ENCODE measurements at regions of chr19 and their contacts with region 1.

Region 1: DNA sequence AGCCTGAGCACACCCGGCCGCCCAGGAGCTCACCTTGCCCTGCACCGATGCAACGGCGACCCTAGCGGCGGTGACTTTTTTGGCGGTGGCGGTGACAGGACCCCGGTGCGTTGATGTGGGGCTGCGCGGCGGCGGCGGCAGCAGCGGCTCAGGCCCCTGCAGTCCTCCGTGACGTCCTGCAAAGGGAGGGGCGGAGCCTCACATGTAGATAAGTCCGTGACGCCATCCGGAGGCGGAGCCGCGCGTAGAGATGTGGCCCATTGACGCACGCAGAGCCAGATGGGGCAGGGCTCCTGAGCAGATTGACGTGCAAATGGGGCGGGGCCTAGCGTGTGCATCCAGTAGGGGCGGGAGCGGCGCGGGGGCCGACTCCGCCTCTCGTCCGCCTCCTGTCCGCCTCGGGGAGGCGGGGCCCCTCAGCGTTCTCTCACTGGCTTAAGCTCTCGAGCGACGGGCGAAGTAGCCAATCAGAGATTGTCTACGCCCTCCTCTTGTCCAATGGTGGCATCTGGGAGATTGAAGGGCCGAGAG is at the start of gene RAB3A:
- DNase-seq: peak; percentile 100
- ATAC-seq: peak; percentile 83
- H3K4me3 ChIP-seq: peak within 1 kb of the TSS; percentile 74 to 94 (median 91)
- H3K4me3 Mint-ChIP-seq: peak within 1 kb of the TSS; percentile 95
- H3K27ac ChIP-seq: peak within 1 kb of the TSS; percentile 86 to 98
- H3K27ac Mint-ChIP-seq: peak within 1 kb of the TSS; percentile 96
- H3K4me1 ChIP-seq: peaks cover 15 to 29% of the 10 kb centered on the region in 2 donors
- H3K4me1 Mint-ChIP-seq: peaks cover 28% of the 10 kb centered on the region
- H3K27me3 ChIP-seq: peaks cover 0 to 5% (median 1%) of the 10 kb centered on the region in 4 experiments
- H3K27me3 Mint-ChIP-seq: peaks cover 6% of the 10 kb centered on the region
- CTCF ChIP-seq: no peak
- total RNA-seq, gene RAB3A: 9.6 and 10.4 TPM in 2 replicates

Region 2: DNA sequence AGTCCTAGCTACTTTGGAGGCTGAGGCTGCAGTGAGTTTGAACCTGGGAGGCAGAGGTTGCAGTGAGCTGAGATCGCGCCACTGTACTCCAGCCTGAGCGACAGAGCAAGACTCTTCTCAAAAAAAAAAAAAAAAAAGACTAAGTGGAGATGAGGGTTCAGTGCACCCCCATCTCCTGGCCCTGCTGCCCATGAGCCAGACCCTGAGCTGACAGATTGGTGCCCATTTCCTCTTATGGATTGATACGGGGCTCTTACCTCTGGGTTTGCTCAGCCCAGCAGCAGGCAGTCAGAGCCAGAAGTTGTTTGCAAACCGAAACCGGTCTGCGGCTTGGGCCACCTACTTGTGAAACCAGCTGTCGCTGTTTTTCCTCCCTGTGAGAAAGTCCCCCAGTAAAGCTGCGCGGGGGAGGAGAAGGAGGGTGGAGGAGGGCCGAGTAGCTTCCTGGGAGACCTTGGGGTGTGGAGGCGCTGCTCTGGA is 159.1 kb before region 1 on chr19:
- CTCF ChIA-PET with region 1: no interaction called
- POLR2A ChIA-PET with region 1: interaction called, 10 read pairs
- intact Hi-C with region 1: no loop called
- DNase-seq: peak; percentile 93
- ATAC-seq: peak; percentile 91
- H3K4me3 ChIP-seq: peak overlapping the region in 4 of 5 experiments; percentile 20 to 52 (median 36)
- H3K4me3 Mint-ChIP-seq: peak overlapping the region; percentile 85
- H3K27ac ChIP-seq: peak overlapping the region; percentile 80 to 91
- H3K27ac Mint-ChIP-seq: peak overlapping the region; percentile 97
- H3K4me1 ChIP-seq: peaks cover 38 to 55% of the 10 kb centered on the region in 2 donors
- H3K4me1 Mint-ChIP-seq: peaks cover 52% of the 10 kb centered on the region
- H3K27me3 ChIP-seq: no peaks in the 10 kb centered on the region
- H3K27me3 Mint-ChIP-seq: no peaks in the 10 kb centered on the region
- CTCF ChIP-seq: no peak

Region 3: DNA sequence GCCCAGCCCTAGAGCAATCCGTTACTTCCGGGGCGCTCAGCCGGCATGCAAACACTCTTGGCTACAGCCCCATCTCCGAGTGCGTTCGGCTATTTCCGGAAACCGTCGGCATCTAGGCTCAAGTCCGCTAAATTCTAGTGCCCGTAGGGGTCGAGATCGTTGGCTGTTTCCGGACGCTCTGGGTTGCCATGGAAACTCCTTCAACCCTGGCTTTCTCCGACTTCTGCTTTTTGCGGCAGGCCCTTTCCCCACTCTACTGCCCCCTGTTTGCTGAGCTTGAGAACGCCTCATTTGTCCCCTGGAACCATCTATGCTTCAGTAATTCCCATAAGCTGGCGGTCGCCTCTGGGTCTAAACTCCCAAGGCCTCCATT is 51.5 kb before region 1 on chr19:
- CTCF ChIA-PET with region 1: no interaction called
- POLR2A ChIA-PET with region 1: no interaction called
- intact Hi-C with region 1: loop called (anchors 1 kb)
- DNase-seq: peak; percentile 100
- ATAC-seq: peak; percentile 71
- H3K4me3 ChIP-seq: peak overlapping the region; percentile 63 to 88 (median 70)
- H3K4me3 Mint-ChIP-seq: peak overlapping the region; percentile 89
- H3K27ac ChIP-seq: peak overlapping the region; percentile 90 to 93
- H3K27ac Mint-ChIP-seq: peak overlapping the region; percentile 95
- H3K4me1 ChIP-seq: peaks cover 14 to 25% of the 10 kb centered on the region in 2 donors
- H3K4me1 Mint-ChIP-seq: peaks cover 23% of the 10 kb centered on the region
- H3K27me3 ChIP-seq: no peaks in the 10 kb centered on the region
- H3K27me3 Mint-ChIP-seq: no peaks in the 10 kb centered on the region
- CTCF ChIP-seq: peak; percentile 88

Region 4: GRCh38 chr19:18173572-18174288 is 30.2 kb before region 1 on chr19 and contains the start of gene IFI30:
- CTCF ChIA-PET with region 1: interaction called, 5 read pairs
- POLR2A ChIA-PET with region 1: interaction called, 7 read pairs
- intact Hi-C with region 1: loop called (anchors 1 kb)
- DNase-seq: peak; percentile 97
- ATAC-seq: peak; percentile 65
- H3K4me3 ChIP-seq: peak within 1 kb of the TSS; percentile 67 to 97 (median 83)
- H3K4me3 Mint-ChIP-seq: peak within 1 kb of the TSS; percentile 94
- H3K27ac ChIP-seq: peak within 1 kb of the TSS; percentile 97 to 99
- H3K27ac Mint-ChIP-seq: peak within 1 kb of the TSS; percentile 98
- H3K4me1 ChIP-seq: peaks cover 72 to 90% of the 10 kb centered on the region in 2 donors
- H3K4me1 Mint-ChIP-seq: peaks cover 84% of the 10 kb centered on the region
- H3K27me3 ChIP-seq: no peaks in the 10 kb centered on the region
- H3K27me3 Mint-ChIP-seq: no peaks in the 10 kb centered on the region
- CTCF ChIP-seq: no peak
- total RNA-seq, gene IFI30: 171 TPM in 2 replicates

Region 5: DNA sequence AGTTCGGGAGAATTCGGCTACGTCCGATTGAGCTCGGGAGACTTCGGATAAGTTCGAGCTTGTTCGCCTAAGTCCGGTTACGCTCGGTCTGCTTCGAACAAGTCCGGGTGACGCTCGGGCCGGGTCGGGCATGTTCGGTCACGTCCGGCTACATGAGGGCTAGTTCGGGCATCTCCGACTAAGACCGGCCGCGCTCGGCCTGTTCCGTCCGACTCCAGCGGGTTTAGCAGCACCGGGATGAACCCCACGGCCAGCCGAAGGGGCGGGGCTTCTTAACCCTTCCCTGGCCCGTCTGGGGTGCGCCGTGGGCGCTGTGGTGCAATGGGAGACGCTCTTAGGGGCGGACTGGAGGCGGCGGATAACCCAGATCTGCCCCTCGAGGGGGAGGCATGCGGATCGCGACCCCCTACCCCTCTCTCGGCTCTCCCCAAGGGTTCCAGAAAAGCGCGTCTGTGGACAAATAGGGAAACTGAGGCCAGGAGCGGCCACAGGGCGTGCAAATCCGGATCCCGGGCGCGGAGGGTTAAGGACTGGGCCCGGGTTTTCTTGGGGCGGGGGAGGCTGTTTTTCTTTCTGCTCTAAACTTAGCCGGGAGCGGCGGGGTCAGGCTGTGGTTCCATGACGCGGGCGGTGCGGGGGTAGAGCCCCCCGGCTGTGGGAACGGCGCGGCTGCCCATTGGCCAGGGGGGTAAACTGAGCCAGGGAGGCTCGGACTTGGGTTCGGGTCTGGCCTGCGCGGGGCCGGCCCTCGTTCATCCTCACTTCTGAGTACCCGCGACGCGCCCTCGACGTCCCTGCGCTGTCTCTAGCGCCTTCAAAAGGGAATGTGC is 20.8 kb after region 1 on chr19:
- CTCF ChIA-PET with region 1: interaction called, 6 read pairs
- POLR2A ChIA-PET with region 1: interaction called, 7 read pairs
- intact Hi-C with region 1: loop called (anchors 1 kb)
- DNase-seq: peak; percentile 93
- ATAC-seq: peak; percentile 99
- H3K4me3 ChIP-seq: peak overlapping the region; percentile 21 to 68 (median 46)
- H3K4me3 Mint-ChIP-seq: peak overlapping the region; percentile 91
- H3K27ac ChIP-seq: no peak overlapping the region
- H3K27ac Mint-ChIP-seq: peak overlapping the region; percentile 71
- H3K4me1 ChIP-seq: peaks cover 29 to 36% of the 10 kb centered on the region in 2 donors
- H3K4me1 Mint-ChIP-seq: peaks cover 36% of the 10 kb centered on the region
- H3K27me3 ChIP-seq: peaks cover 0 to 85% (median 41%) of the 10 kb centered on the region in 4 experiments
- H3K27me3 Mint-ChIP-seq: peaks cover 53% of the 10 kb centered on the region
- CTCF ChIP-seq: no peak

Region 6: DNA sequence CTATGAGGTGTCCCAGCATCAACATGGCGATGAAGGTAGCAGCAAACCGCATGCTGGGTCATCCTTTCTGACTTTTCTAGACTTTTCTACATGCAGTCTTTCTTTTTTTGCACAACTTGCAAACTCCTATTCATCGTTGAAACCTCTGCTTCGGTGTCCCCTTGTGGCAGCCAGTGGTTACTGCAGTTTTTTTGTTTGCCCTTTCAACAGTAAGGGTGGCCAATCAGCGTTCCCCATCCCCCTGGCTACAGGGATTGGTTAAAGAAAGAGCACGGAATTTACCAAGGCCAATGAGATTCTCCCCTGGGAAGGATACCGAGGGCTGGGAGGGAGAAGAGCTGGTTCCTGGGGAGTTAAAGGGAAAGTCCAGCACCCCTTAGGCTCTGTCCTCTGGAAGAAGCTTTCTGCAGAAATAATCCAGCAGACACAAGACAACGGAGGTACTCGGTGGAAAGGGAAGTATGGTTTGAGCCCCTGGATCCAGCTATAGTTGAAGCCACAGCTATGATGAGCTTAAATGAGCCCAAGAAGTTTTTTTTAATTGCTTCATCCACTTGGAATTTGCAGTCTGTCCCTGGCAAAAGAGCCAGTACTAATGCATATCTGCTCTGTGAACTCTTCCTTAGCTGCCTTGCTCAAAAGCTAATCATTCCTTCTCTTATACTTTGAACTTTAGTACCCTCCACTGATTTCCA is 124.6 kb after region 1 on chr19:
- CTCF ChIA-PET with region 1: interaction called, 30 read pairs
- POLR2A ChIA-PET with region 1: no interaction called
- intact Hi-C with region 1: loop called (anchors 1 kb)
- DNase-seq: peak; percentile 92
- ATAC-seq: peak; percentile 98
- H3K4me3 ChIP-seq: peak overlapping the region; percentile 16 to 62 (median 32)
- H3K4me3 Mint-ChIP-seq: peak overlapping the region; percentile 57
- H3K27ac ChIP-seq: no peak overlapping the region
- H3K27ac Mint-ChIP-seq: no peak overlapping the region
- H3K4me1 ChIP-seq: peaks cover 11 to 15% of the 10 kb centered on the region in 2 donors
- H3K4me1 Mint-ChIP-seq: peaks cover 16% of the 10 kb centered on the region
- H3K27me3 ChIP-seq: peaks cover 0 to 7% (median 0%) of the 10 kb centered on the region in 4 experiments
- H3K27me3 Mint-ChIP-seq: no peaks in the 10 kb centered on the region
- CTCF ChIP-seq: peak; percentile 87

Region 7: GRCh38 chr19:18428787-18429674 is 225.1 kb after region 1 on chr19:
- CTCF ChIA-PET with region 1: no interaction called
- POLR2A ChIA-PET with region 1: no interaction called
- intact Hi-C with region 1: no loop called
- DNase-seq: peak; percentile 96
- ATAC-seq: peak; percentile 81
- H3K4me3 ChIP-seq: peak overlapping the region in 4 of 5 experiments; percentile 54 to 61 (median 58)
- H3K4me3 Mint-ChIP-seq: peak overlapping the region; percentile 78
- H3K27ac ChIP-seq: peak overlapping the region; percentile 85 to 89
- H3K27ac Mint-ChIP-seq: peak overlapping the region; percentile 86
- H3K4me1 ChIP-seq: peaks cover 24 to 39% of the 10 kb centered on the region in 2 donors
- H3K4me1 Mint-ChIP-seq: peaks cover 21% of the 10 kb centered on the region
- H3K27me3 ChIP-seq: no peaks in the 10 kb centered on the region
- H3K27me3 Mint-ChIP-seq: no peaks in the 10 kb centered on the region
- CTCF ChIP-seq: no peak

Region 8: GRCh38 chr19:18831524-18832305 is 627.8 kb after region 1 on chr19 and contains the start of gene UPF1:
- CTCF ChIA-PET with region 1: no interaction called
- POLR2A ChIA-PET with region 1: no interaction called
- intact Hi-C with region 1: loop called (anchors 5 kb)
- DNase-seq: peak; percentile 97
- ATAC-seq: peak; percentile 81
- H3K4me3 ChIP-seq: peak within 1 kb of the TSS; percentile 63 to 82 (median 73)
- H3K4me3 Mint-ChIP-seq: peak within 1 kb of the TSS; percentile 91
- H3K27ac ChIP-seq: peak within 1 kb of the TSS; percentile 60 to 90
- H3K27ac Mint-ChIP-seq: peak within 1 kb of the TSS; percentile 92
- H3K4me1 ChIP-seq: peaks cover 34 to 39% of the 10 kb centered on the region in 2 donors
- H3K4me1 Mint-ChIP-seq: peaks cover 36% of the 10 kb centered on the region
- H3K27me3 ChIP-seq: no peaks in the 10 kb centered on the region
- H3K27me3 Mint-ChIP-seq: peaks cover 8% of the 10 kb centered on the region
- CTCF ChIP-seq: no peak
- total RNA-seq, gene UPF1: 95.1 and 98.6 TPM in 2 replicates

Measured in B cell (primary cell).